Psoas muscle (tissue), 8 donors: ENCODE measurements at regions of chr11 and their contacts with region 1.

Region 1: DNA sequence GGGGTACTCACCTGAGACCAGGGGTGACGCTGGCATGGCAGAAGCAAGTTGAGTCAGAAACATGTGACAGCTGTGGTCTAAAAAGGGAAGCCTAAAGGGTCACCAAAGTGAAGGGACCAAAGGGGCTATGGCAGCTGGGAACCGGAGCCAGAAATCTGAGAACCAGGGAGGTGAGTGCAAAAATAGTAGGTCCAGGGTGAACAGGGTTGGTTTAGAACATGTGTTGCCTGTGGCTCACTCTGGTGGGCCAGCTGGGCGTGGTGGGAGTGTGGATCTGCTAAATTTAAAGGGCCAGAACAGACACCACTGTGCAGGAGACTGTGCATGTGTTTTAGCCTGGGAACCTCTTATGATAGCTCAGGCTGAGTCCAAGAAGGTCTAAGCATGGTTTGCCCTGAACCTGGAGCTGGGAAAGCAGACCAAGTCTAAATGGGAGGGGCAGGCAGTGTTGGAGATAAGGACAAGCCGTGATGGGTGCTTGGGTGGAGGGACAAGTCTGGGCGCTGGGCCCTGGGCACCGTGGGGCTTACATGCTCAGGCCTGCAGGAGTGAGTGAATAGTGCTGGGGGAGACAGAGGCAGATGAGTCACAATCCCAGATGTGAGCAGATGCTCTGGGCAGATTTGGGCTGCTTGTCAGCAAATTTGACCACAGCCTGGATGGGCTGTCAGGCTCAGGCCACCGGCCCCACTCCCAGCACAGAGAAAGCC is 41.4 kb upstream of the ZBED5 start:
- DNase-seq: peak; percentile 68 to 86
- ATAC-seq: peak; percentile 71 to 76 (median 75)
- H3K4me3 ChIP-seq: peak overlapping the region; percentile 67
- H3K27ac ChIP-seq: peak overlapping the region; percentile 91
- H3K4me1 ChIP-seq: peaks cover 38% of the 10 kb centered on the region
- H3K27me3 ChIP-seq: no peaks in the 10 kb centered on the region
- CTCF ChIP-seq: no peak

Region 2: GRCh38 chr11:10032935-10033334 is 866.3 kb before region 1 on chr11:
- intact Hi-C with region 1: no loop called
- DNase-seq: no peak
- ATAC-seq: no peak
- H3K4me3 ChIP-seq: no peak overlapping the region
- H3K27ac ChIP-seq: no peak overlapping the region
- H3K4me1 ChIP-seq: no peaks in the 10 kb centered on the region
- H3K27me3 ChIP-seq: no peaks in the 10 kb centered on the region
- CTCF ChIP-seq: no peak

Region 3: DNA sequence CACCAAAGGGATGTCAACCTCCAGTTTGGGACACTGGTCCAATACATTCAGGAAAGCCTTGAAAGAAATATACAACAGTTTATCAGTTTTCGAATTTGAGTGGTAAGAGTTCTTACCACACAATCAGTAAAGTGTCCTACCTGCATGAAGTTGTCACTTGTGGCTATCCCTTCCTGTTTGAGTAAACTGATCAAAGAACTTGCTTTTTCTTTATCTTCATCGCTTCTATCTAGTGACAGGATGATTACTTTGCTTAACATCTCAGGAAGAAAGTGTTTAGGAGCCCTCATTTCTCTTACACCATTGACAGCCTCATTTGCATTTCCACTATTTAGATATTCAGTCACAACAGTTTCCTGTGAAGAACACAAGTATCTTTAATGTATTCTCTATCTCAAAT is 99.0 kb before region 1 on chr11:
- intact Hi-C with region 1: loop called (anchors 2 to 5 kb)
- DNase-seq: no peak
- ATAC-seq: no peak
- H3K4me3 ChIP-seq: no peak overlapping the region
- H3K27ac ChIP-seq: no peak overlapping the region
- H3K4me1 ChIP-seq: peaks cover 25% of the 10 kb centered on the region
- H3K27me3 ChIP-seq: no peaks in the 10 kb centered on the region
- CTCF ChIP-seq: no peak

Region 4: DNA sequence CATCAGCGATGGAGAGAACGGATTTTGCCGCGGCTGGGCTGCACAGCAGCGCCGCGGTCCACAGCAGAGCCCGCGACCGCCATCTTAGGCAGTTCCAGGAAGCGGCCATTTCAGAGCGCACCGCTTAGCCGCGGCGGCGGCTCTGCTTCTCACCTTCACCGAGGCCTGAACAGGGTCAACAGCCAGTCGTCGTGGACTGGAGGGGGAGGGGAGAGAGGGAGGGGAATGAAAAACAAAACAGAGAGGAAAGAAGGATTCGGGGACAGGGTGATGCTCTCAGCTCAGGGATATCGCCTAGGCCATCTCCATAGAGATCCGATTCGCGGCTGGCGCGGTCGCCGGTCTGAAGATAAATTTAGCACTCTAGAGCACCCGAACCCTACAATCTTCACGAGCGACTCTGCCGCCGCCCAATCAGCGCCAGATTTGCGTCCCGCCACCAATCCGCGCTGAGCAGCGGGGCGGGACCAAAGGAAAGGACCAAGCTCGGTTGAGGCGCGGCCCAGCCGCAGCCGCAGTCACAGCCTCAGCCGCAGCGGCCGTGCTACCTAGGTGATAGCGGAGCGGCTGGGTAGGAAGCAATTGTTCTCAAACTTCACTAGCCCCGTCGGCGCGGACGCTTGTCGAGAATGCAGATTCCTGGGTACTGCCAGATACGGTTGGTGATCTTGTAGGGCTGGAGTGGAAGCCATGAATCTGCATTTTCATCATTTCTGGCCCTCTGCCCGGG is 41.4 kb before region 1 on chr11 and contains the start of gene ZBED5:
- intact Hi-C with region 1: loop called (anchors 1 to 2 kb)
- DNase-seq: peak; percentile 97 to 98
- ATAC-seq: peak; percentile 93 to 97 (median 96)
- H3K4me3 ChIP-seq: peak within 1 kb of the TSS; percentile 77
- H3K27ac ChIP-seq: peak within 1 kb of the TSS; percentile 92
- H3K4me1 ChIP-seq: peaks cover 43% of the 10 kb centered on the region
- H3K27me3 ChIP-seq: no peaks in the 10 kb centered on the region
- CTCF ChIP-seq: peak; percentile 26
- total RNA-seq, gene ZBED5: 25.5 to 47.8 (median 29.4) TPM

Region 5: DNA sequence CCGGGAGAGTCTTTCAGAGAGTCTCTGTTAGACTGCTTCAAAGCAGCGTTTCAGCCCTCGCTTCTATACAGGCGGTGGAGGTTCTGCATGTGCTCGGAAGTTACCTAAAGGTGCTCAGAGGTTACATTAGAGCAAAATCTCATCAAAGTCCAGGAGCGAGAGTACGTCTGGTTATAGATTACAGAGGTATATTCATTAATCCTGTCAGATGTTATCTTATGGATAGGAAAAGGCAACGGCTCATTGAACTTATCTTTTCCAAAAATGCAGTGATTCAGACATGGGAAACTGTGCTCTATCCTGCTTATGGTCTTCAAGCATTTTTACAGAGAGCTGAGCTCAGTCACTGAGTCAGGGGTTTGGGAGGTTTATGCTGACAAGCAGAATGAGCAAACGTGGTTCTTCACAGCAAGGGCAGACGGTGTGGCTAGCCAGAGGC is 32.4 kb before region 1 on chr11:
- intact Hi-C with region 1: loop called in 1 of 2 experiments (anchors 1 kb)
- DNase-seq: no peak
- ATAC-seq: peak in 3 of 4 donors; percentile 52 to 68 (median 68)
- H3K4me3 ChIP-seq: peak overlapping the region; percentile 17
- H3K27ac ChIP-seq: peak overlapping the region; percentile 60
- H3K4me1 ChIP-seq: peaks cover 34% of the 10 kb centered on the region
- H3K27me3 ChIP-seq: no peaks in the 10 kb centered on the region
- CTCF ChIP-seq: no peak